ENCODE measurements at regions of chr10 and their contacts with region 1.

Region 1: GRCh38 chr10:69179743-69180524 is at the start of gene SUPV3L1:
- DNase-seq: peak; percentile 80 to 96
- H3K4me3 ChIP-seq: peak within 1 kb of the TSS; percentile 81 to 95
- H3K27ac ChIP-seq: peak within 1 kb of the TSS; percentile 89 to 90
- H3K4me1 ChIP-seq: peaks cover 4 to 17% of the 10 kb centered on the region in 2 donors
- H3K27me3 ChIP-seq: no peaks in the 10 kb centered on the region
- CTCF ChIP-seq: no peak
- total RNA-seq, gene SUPV3L1: 4.6 TPM

Region 2: GRCh38 chr10:68406815-68407548 is 773.0 kb before region 1 on chr10 and contains the start of gene RUFY2:
- intact Hi-C with region 1: loop called (anchors 10 kb)
- DNase-seq: peak; percentile 19 to 86
- H3K4me3 ChIP-seq: peak within 1 kb of the TSS; percentile 86 to 89
- H3K27ac ChIP-seq: peak within 1 kb of the TSS; percentile 91 to 92
- H3K4me1 ChIP-seq: no peaks in the 10 kb centered on the region
- H3K27me3 ChIP-seq: no peaks in the 10 kb centered on the region
- CTCF ChIP-seq: peak in 2 of 3 experiments; percentile 52 to 99
- total RNA-seq, gene RUFY2: 7.5 TPM

Region 3: DNA sequence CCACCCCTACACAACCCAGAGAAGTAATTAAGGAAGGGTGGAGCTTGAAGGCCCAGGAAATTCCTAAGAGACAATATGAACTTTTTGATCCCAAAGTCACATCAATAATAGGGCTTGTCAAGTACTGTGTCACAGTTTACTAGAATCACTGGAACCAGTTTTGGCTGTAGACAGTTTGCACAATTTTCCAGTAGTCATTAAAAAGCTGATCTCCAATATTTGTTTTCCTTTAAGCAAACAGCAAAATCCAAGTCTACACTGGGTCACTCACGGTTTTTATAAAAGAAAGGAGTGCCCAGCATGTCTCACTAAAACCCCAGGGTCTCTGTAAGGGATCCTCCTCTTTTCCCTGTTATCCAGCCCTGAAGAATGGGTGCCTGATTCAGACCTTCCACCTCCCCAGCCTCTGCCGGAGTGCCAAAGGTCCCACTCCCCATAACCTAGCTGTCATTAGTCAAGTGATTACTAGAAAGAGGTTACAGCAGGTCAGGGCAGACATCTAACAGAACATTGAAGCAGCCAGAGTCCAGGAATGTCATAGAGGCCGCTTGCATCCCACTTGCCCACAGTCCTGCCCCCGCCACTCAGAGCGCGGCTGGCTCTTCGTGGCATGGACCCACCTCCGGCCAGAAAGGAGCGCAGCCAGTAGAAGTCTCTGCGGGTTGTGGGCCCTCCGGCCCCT is 653.2 kb before region 1 on chr10:
- intact Hi-C with region 1: loop called (anchors 2 kb)
- DNase-seq: no peak
- H3K4me3 ChIP-seq: peak overlapping the region; percentile 94 to 95
- H3K27ac ChIP-seq: peak overlapping the region; percentile 95 to 97
- H3K4me1 ChIP-seq: no peaks in the 10 kb centered on the region
- H3K27me3 ChIP-seq: no peaks in the 10 kb centered on the region
- CTCF ChIP-seq: no peak

Region 4: GRCh38 chr10:68988530-68989316 is 191.2 kb before region 1 on chr10 and contains the start of gene KIFBP:
- intact Hi-C with region 1: loop called (anchors 5 kb)
- DNase-seq: peak; percentile 89 to 98
- H3K4me3 ChIP-seq: peak within 1 kb of the TSS; percentile 71 to 85
- H3K27ac ChIP-seq: peak within 1 kb of the TSS; percentile 85 to 88
- H3K4me1 ChIP-seq: peaks cover 5 to 36% of the 10 kb centered on the region in 2 donors
- H3K27me3 ChIP-seq: no peaks in the 10 kb centered on the region
- CTCF ChIP-seq: peak; percentile 28 to 61 (median 56)
- total RNA-seq, gene KIFBP: 25.3 TPM

Region 5: DNA sequence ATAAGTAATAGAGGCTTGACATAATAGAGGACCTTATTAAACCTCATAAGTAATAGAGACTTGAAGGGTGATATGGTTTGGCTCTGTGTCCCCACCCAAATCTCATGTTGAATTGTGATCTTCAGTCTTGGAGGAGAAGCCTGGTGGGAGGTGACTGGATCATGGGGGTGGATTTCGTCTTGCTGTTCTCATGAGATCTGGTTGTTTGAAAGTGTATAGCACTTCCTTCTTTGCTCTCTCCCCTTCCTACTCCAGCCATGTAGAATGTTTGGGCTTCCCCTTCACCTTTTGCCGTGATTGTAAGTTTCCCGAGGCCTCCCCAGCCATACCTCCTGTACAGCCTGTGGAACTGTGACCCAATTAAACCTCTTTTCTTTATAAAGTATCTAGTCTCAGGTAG is 182.7 kb before region 1 on chr10:
- intact Hi-C with region 1: loop called (anchors 5 kb)
- DNase-seq: no peak
- H3K4me3 ChIP-seq: no peak overlapping the region
- H3K27ac ChIP-seq: peak overlapping the region; percentile 54 to 68
- H3K4me1 ChIP-seq: peaks cover 5 to 28% of the 10 kb centered on the region in 2 donors
- H3K27me3 ChIP-seq: no peaks in the 10 kb centered on the region
- CTCF ChIP-seq: no peak

Region 6: GRCh38 chr10:69168493-69168892 is 11.4 kb before region 1 on chr10:
- intact Hi-C with region 1: no loop called
- DNase-seq: no peak
- H3K4me3 ChIP-seq: no peak overlapping the region
- H3K27ac ChIP-seq: no peak overlapping the region
- H3K4me1 ChIP-seq: no peaks in the 10 kb centered on the region
- H3K27me3 ChIP-seq: no peaks in the 10 kb centered on the region
- CTCF ChIP-seq: no peak

Region 7: DNA sequence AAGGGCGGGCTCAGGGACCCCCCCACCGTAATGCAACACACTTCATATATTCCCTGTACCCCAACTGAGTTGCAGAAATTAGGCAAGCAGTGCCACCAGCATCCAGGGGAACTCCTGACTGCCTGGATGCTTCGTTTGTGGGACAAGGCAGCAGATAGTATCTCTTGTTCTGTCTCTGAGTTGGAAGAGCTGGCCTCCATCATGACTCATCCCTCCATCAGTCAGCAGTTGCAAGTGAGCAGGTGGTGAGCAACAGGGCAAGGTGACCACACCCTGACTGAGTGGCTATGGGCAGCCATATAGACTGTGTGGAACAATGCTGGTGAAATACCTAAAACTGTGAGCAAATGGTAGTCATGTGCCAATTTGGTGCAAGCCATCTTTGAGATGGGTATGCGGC is 1469.6 kb after region 1 on chr10:
- intact Hi-C with region 1: no loop called
- DNase-seq: no peak
- H3K4me3 ChIP-seq: no peak overlapping the region
- H3K27ac ChIP-seq: no peak overlapping the region
- H3K4me1 ChIP-seq: no peaks in the 10 kb centered on the region
- H3K27me3 ChIP-seq: no peaks in the 10 kb centered on the region
- CTCF ChIP-seq: no peak